Activated CD4-positive, alpha-beta T cell treated with anti-CD3 and anti-CD28 coated beads for 36 hours (primary cell): ENCODE measurements at regions of chr11 and their contacts with region 1.

Region 1: GRCh38 chr11:11841723-11842420 is at the start of gene USP47:
- DNase-seq: peak; percentile 97
- ATAC-seq: peak; percentile 54
- H3K4me3 Mint-ChIP-seq: no peak within 1 kb of the TSS
- H3K27ac Mint-ChIP-seq: no peak within 1 kb of the TSS
- H3K4me1 Mint-ChIP-seq: peaks cover 28% of the 10 kb centered on the region
- H3K27me3 Mint-ChIP-seq: peaks cover 8% of the 10 kb centered on the region
- total RNA-seq, gene USP47: 43.3 to 56.3 TPM

Region 2: DNA sequence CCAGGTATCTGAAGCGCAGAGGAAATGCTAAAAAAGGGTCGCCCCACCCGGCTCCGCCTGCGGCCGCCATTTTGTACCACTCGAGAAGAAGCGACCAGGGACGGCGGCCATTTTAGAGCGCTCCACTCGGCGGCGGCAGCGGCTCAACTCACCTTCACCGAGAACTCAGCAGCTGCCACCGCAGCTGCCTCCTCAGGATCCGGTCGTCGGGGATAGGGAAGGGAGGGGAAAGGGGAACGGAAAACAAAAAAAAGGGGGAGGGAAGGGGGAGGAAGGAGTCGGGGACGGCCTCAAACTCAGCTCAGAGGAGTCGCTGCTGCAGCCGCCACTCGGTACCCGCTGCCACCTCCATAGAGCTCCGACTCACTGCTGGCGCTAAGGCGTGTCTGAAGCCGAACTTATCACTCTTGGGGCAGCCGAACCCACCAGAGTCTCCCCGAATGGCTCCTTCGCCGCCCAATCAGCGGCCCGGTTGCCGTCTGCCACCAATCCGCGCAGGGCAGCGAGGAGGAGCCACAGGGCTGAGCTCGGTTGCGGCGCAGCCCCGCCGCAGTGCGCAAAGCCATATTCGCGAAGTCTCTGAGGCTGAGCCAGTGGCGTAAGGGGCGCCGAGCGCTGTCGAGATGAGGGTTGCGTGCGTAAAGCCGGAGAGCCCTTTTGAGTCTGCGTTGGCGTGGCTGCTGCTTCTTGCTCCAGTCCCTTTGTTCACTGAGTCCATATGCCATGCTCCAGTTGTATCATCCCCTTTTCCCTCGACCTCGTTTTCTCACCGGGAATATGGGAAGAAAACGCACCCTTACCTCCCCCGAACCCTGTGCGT is 1033.1 kb before region 1 on chr11 and contains the start of gene EIF4G2:
- CTCF ChIA-PET with region 1: interaction called, 3 read pairs
- POLR2A ChIA-PET with region 1: interaction called, 17 read pairs
- intact Hi-C with region 1: loop called (anchors 1 to 5 kb)
- DNase-seq: peak; percentile 98
- ATAC-seq: peak; percentile 96
- H3K4me3 Mint-ChIP-seq: peak within 1 kb of the TSS; percentile 93
- H3K27ac Mint-ChIP-seq: peak within 1 kb of the TSS; percentile 96
- H3K4me1 Mint-ChIP-seq: peaks cover 42% of the 10 kb centered on the region
- H3K27me3 Mint-ChIP-seq: peaks cover 2% of the 10 kb centered on the region
- total RNA-seq, gene EIF4G2: 953 to 1,693 TPM

Region 3: GRCh38 chr11:11798586-11799438 is 43.1 kb before region 1 on chr11:
- CTCF ChIA-PET with region 1: interaction called, 9 read pairs
- POLR2A ChIA-PET with region 1: interaction called, 11 read pairs
- intact Hi-C with region 1: no loop called
- DNase-seq: peak; percentile 89
- ATAC-seq: peak; percentile 93
- H3K4me3 Mint-ChIP-seq: no peak overlapping the region
- H3K27ac Mint-ChIP-seq: no peak overlapping the region
- H3K4me1 Mint-ChIP-seq: no peaks in the 10 kb centered on the region
- H3K27me3 Mint-ChIP-seq: peaks cover 21% of the 10 kb centered on the region

Region 4: GRCh38 chr11:11895672-11896071 is 53.8 kb after region 1 on chr11:
- CTCF ChIA-PET with region 1: interaction called, 15 read pairs
- POLR2A ChIA-PET with region 1: no interaction called
- intact Hi-C with region 1: no loop called
- DNase-seq: no peak
- ATAC-seq: no peak
- H3K4me3 Mint-ChIP-seq: no peak overlapping the region
- H3K27ac Mint-ChIP-seq: no peak overlapping the region
- H3K4me1 Mint-ChIP-seq: peaks cover 5% of the 10 kb centered on the region
- H3K27me3 Mint-ChIP-seq: no peaks in the 10 kb centered on the region

Region 5: GRCh38 chr11:12174477-12175143 is 332.7 kb after region 1 on chr11:
- CTCF ChIA-PET with region 1: no interaction called
- POLR2A ChIA-PET with region 1: interaction called, 4 read pairs
- intact Hi-C with region 1: loop called in 1 of 2 experiments (anchors 1 kb)
- DNase-seq: no peak
- ATAC-seq: peak; percentile 59
- H3K4me3 Mint-ChIP-seq: peak overlapping the region; percentile 47
- H3K27ac Mint-ChIP-seq: peak overlapping the region; percentile 94
- H3K4me1 Mint-ChIP-seq: peaks cover 69% of the 10 kb centered on the region
- H3K27me3 Mint-ChIP-seq: no peaks in the 10 kb centered on the region

Region 6: DNA sequence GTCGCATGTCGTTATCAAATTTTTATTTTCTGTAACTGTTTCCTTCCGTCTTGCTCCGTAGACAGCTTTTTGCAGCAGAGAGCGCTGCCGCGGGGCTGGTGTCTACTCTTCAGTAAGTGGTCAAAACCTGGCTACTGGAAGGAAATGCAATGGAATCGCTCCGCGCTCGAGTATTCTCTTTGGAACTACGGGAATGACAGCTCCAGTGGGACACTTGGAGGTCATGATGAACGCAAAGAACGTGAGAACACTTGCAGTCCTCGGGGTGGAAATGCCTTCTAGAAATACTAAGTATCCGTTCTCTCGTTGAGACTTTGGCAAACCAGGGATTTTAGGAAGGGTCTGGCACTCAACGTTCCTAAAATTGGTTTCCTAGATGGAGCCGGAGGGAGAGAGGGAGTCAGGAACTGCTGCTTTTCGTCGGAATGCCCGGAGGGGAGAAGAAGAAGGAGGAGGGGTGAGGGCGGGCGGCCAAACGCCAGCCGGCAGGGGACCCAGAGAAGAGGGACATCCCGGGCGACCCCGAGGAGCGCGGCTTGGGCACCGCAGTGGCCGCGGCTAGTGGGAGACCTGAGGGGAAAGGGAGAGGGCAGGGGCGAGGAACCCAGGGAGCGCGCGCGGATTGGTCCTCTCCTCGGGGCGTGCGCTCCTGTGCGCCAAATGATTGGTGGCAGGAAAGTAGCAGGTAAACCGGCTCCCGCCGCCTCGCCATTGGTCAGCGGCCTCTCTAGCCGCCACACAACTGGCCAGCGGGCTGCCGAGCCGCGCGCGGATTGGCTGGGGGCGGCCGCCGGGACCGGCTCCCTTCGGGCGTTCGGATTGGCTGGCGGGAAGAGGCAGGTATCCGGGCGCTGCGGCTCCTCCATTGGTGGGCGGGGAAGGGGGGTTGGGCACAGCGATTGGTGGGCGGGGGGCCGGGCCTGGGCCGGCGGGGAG is 1435.2 kb after region 1 on chr11:
- CTCF ChIA-PET with region 1: no interaction called
- POLR2A ChIA-PET with region 1: no interaction called
- intact Hi-C with region 1: loop called in 1 of 2 experiments (anchors 5 kb)
- DNase-seq: peak; percentile 98
- ATAC-seq: peak; percentile 93
- H3K4me3 Mint-ChIP-seq: peak overlapping the region; percentile 87
- H3K27ac Mint-ChIP-seq: peak overlapping the region; percentile 84
- H3K4me1 Mint-ChIP-seq: peaks cover 43% of the 10 kb centered on the region
- H3K27me3 Mint-ChIP-seq: peaks cover 6% of the 10 kb centered on the region